Cardiac septum (tissue), 1 donor: ENCODE measurements at regions of chr14 and their contacts with region 1.

Region 1: GRCh38 chr14:94175011-94175745 is 1.1 kb downstream of the PPP4R4 start:
- DNase-seq: no peak

Region 2: DNA sequence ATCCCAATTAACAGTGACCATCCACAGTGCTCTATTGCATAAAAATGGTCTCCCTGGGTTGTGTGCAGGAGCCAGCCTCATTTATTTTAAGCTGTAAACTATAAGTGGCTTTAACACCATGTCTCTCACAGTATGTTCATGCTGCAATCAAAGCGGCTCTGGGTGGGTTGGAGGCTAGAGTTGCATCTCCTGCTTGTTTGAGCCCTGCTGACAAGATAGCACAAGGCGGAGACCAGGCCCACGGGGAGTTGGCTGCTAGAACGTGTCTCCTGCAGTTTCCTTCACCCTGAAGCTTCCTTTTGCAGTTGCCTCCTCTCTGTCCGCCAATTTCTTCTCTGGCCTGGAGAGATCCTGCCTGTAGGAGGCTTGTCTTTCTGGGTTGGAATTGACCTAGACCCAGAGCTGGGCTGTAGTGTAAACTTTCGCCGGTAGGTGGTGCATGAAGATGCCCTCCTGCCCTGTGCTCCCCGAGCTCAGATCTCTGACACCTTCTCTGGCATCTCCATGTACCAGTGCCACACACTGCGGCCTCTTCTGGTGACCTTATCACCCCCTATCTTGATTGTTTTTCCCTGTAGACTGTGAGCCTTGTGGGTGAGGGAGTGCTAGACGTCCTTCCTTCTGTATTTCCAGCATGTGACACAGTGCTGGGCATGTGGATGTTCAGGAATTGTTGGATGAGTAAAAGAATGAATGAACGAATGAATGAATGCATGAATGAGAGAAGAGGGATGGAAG is 138.7 kb before region 1 on chr14:
- intact Hi-C with region 1: loop called (anchors 5 kb)
- DNase-seq: no peak

Region 3: DNA sequence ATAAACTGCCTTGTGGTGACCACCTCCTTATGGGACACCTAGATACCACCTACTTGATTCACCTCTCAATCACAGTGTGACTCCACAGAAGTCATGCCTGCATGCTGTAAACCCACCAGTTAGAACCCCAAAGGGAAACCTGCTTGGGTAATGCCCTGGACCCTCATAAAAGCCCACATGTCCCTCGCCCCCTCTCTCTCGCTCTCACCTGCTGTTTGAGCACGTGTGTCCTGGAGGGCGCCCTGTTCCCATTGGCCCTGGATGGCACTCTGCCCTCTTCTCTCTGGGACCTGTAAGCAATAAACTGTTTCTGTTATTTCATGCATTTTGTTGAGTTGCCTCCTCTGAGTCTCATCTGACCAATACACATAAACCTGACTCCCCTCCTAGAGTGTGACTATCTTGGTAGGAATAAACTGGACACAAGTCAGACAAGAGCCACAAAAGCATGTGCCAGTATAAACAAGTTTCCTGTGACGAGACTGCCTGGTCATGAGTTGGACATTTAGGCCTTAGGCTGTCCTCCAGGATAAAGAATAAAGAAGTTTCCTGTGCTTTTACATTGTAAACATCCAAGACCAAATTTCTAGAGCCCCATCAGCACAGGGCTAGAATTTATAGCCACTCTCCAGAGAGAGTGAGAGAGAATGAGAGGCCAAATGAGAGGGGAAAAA is 54.4 kb before region 1 on chr14:
- intact Hi-C with region 1: no loop called
- DNase-seq: peak; percentile 64

Region 4: GRCh38 chr14:94213021-94213420 is 37.8 kb after region 1 on chr14:
- intact Hi-C with region 1: no loop called
- DNase-seq: no peak

Region 5: GRCh38 chr14:94225460-94226378 is 50.5 kb after region 1 on chr14:
- intact Hi-C with region 1: no loop called
- DNase-seq: no peak

Region 6: GRCh38 chr14:94269156-94269555 is 94.0 kb after region 1 on chr14:
- intact Hi-C with region 1: no loop called
- DNase-seq: no peak